ENCODE measurements at regions of chr10 and their contacts with region 1.

Region 1: DNA sequence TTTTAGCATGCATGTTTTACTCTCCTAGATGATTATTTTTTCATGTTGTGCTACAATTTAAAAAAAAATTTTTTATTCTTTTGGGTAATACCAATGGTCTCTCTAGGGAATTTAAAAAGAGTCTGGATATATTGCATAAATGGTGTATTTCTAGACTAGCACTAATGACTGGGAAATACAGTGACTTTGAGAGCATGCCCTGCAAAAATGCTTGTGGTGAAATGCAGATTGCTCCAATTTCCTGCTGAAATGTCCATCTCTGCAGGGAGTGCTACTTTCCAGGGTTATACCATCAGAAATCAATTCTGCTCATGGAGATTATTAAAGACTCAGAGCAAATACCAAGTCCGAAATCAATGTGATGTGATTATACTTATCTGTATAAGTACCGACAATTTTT is 186.1 kb downstream of the PRKG1 start:
- DNase-seq: no peak
- H3K4me3 ChIP-seq: no peak overlapping the region
- H3K27ac ChIP-seq: no peak overlapping the region
- H3K4me1 ChIP-seq: no peaks in the 10 kb centered on the region
- H3K27me3 ChIP-seq: no peaks in the 10 kb centered on the region
- CTCF ChIP-seq: no peak

Region 2: GRCh38 chr10:51214207-51215196 is 45.9 kb before region 1 on chr10:
- CTCF ChIA-PET with region 1: no interaction called
- POLR2A ChIA-PET with region 1: no interaction called
- intact Hi-C with region 1: loop called (anchors 5 kb)
- DNase-seq: no peak
- H3K4me3 ChIP-seq: no peak overlapping the region
- H3K27ac ChIP-seq: no peak overlapping the region
- H3K4me1 ChIP-seq: no peaks in the 10 kb centered on the region
- H3K27me3 ChIP-seq: no peaks in the 10 kb centered on the region
- CTCF ChIP-seq: no peak